ENCODE measurements at regions of chr19 and their contacts with region 1.

Region 1: DNA sequence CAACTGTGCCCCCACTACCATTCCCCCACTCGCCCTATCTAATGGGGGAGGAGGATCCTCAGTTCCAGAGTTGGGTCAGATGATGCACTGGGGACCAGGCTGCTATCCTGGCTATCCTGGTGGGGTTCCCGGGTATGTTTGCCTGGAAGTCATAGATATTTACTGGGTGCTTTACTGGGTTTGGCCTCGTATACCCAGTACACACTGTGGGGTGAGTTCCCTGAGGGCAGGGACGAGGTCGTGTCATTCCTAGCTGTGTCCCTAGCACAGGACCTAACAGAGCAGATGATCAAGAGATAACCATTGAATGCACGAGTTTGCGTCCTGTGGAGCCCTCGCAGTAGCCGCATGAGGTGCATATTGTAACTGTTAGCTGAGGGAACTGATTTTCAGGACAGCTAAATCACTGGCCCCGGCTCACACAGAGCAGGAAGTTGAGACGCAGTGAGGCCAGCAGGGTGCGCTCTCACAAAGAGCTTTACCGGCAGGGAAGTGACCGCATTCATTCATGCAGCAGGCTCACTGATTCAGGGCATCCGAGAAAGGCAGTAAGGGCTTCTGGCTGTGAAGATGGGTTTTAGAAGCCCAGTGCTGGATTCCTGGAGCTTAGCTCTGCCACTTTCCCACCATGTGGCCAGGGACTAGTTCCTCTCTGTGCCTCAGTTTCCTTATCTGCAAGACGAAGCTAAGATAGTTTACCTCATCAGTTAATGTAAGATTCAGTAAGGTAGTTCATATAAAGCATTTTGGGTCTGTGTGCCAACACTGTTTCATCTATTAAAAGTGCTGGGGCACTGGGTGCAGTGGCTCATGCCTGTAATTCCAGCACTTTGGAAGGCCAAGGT is 6.0 kb downstream of the RUVBL2 start:
- DNase-seq: peak; percentile 89
- ATAC-seq: peak; percentile 90
- H3K4me3 Mint-ChIP-seq: no peak overlapping the region; the same call in 1 of the 2 replicates
- H3K27ac Mint-ChIP-seq: peak overlapping the region; percentile 88
- H3K4me1 Mint-ChIP-seq: peaks cover 14% of the 10 kb centered on the region
- H3K27me3 Mint-ChIP-seq: no peaks in the 10 kb centered on the region
- CTCF ChIP-seq: peak; percentile 48; the same call in 1 of the 2 replicates

Region 2: DNA sequence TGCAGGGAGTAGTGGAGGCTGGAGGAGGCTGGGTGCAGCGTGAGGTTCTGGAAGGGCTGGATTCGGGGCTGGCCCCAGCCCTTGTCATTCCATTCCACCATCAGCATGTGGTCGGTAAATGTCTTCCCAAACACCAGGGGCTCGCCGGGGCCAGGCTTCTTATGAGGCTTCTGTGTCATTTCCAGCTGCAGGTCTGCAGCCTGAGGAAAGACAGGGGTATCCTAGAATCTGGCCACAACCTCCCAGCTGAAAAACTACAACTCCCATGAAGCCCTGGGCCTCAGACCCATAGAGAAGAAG is 193.2 kb before region 1 on chr19:
- CTCF ChIA-PET with region 1: no interaction called
- POLR2A ChIA-PET with region 1: no interaction called
- DNase-seq: peak; percentile 76
- ATAC-seq: no peak
- H3K4me3 Mint-ChIP-seq: peak overlapping the region; percentile 36; the same call in 1 of the 2 replicates
- H3K27ac Mint-ChIP-seq: peak overlapping the region; percentile 79; the same call in 1 of the 2 replicates
- H3K4me1 Mint-ChIP-seq: peaks cover 32% of the 10 kb centered on the region
- H3K27me3 Mint-ChIP-seq: peaks cover 17% of the 10 kb centered on the region
- CTCF ChIP-seq: no peak

Region 3: GRCh38 chr19:48965806-48966540 is 33.7 kb before region 1 on chr19:
- CTCF ChIA-PET with region 1: interaction called, 20 read pairs
- POLR2A ChIA-PET with region 1: interaction called, 3 read pairs
- DNase-seq: peak; percentile 91
- ATAC-seq: peak; percentile 16
- H3K4me3 Mint-ChIP-seq: peak overlapping the region; percentile 99
- H3K27ac Mint-ChIP-seq: peak overlapping the region; percentile 93
- H3K4me1 Mint-ChIP-seq: peaks cover 37% of the 10 kb centered on the region
- H3K27me3 Mint-ChIP-seq: no peaks in the 10 kb centered on the region
- CTCF ChIP-seq: no peak

Region 4: DNA sequence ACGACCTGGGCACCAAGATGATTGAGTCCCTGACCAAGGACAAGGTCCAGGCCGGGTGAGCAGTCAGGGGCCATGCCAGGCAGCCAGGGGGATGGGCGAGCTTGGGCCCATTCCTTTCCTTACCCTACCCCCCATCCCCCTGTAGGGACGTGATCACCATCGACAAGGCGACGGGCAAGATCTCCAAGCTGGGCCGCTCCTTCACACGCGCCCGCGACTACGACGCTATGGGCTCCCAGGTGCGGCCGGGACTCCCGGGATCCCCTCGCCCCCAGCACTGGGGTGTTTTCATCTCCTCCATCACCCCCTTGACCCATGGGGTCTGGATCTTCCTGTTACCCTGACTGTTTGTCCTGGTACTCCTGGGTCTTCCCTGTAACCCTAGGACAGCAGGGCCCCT is 10.1 kb after region 1 on chr19:
- CTCF ChIA-PET with region 1: interaction called, 30 read pairs
- POLR2A ChIA-PET with region 1: interaction called, 3 read pairs
- DNase-seq: no peak
- ATAC-seq: no peak
- H3K4me3 Mint-ChIP-seq: no peak overlapping the region
- H3K27ac Mint-ChIP-seq: no peak overlapping the region
- H3K4me1 Mint-ChIP-seq: no peaks in the 10 kb centered on the region
- H3K27me3 Mint-ChIP-seq: no peaks in the 10 kb centered on the region
- CTCF ChIP-seq: no peak

Region 5: DNA sequence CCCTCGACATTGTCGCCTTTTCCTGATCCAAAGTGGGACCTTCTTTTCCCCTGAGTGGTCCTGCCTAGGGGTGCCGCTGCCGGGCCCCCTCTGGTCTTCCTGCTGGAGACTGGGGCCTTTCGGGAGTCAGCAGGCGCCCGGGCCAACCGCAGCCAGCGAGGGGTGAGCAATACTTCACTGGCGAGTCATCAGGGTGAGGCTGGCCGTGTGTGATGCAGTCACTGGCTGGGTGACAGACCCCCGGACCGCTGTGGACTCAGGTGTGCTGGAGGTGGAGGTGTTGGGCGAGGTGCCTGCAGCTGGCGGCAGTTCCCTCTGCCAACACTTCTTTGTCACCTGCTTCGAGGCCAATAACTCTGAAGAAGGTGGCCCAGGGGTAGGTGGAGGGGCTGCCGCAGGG is 42.5 kb after region 1 on chr19:
- CTCF ChIA-PET with region 1: no interaction called
- POLR2A ChIA-PET with region 1: no interaction called
- DNase-seq: no peak
- ATAC-seq: no peak
- H3K4me3 Mint-ChIP-seq: no peak overlapping the region
- H3K27ac Mint-ChIP-seq: no peak overlapping the region
- H3K4me1 Mint-ChIP-seq: no peaks in the 10 kb centered on the region
- H3K27me3 Mint-ChIP-seq: peaks cover 10% of the 10 kb centered on the region
- CTCF ChIP-seq: no peak

Region 6: GRCh38 chr19:49064768-49065611 is 65.3 kb after region 1 on chr19 and contains the start of gene NTF4:
- CTCF ChIA-PET with region 1: interaction called, 21 read pairs
- POLR2A ChIA-PET with region 1: no interaction called
- DNase-seq: peak; percentile 78
- ATAC-seq: peak; percentile 73
- H3K4me3 Mint-ChIP-seq: peak within 1 kb of the TSS; percentile 66
- H3K27ac Mint-ChIP-seq: no peak within 1 kb of the TSS
- H3K4me1 Mint-ChIP-seq: peaks cover 33% of the 10 kb centered on the region
- H3K27me3 Mint-ChIP-seq: peaks cover 79% of the 10 kb centered on the region
- CTCF ChIP-seq: no peak
- total RNA-seq, gene NTF4: 3.9 to 7.7 TPM (median 5.0 TPM) in 3 replicates

Region 7: GRCh38 chr19:49118565-49119410 is 119.1 kb after region 1 on chr19 and contains the start of gene C19orf73:
- CTCF ChIA-PET with region 1: interaction called, 13 read pairs
- POLR2A ChIA-PET with region 1: no interaction called
- DNase-seq: peak; percentile 94
- ATAC-seq: peak; percentile 81
- H3K4me3 Mint-ChIP-seq: peak within 1 kb of the TSS; percentile 75
- H3K27ac Mint-ChIP-seq: peak within 1 kb of the TSS; percentile 61
- H3K4me1 Mint-ChIP-seq: peaks cover 14% of the 10 kb centered on the region
- H3K27me3 Mint-ChIP-seq: peaks cover 64% of the 10 kb centered on the region
- CTCF ChIP-seq: no peak
- total RNA-seq, gene C19orf73: 3.1 to 3.4 TPM (median 3.2 TPM) in 3 replicates

Region 8: DNA sequence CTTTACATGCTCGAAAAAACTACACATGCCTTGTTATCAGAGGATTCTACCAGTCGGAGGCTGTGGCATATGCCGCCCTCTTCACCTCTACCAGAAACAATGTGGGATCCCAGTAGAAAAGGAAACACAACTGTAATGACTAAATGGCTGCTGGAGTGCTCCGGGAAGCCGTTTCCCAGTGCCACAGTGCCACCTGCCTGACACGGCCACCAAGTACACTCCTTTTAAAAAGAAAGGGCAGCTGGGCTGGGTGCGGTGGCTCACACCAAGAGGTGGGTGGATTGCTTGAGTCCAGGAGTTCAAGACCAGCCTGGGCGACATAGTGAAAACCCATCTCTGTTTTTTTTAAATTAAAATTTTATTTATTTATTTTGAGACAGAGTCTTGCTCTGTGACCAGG is 225.2 kb after region 1 on chr19:
- CTCF ChIA-PET with region 1: interaction called, 11 read pairs
- POLR2A ChIA-PET with region 1: no interaction called
- DNase-seq: peak; percentile 79
- ATAC-seq: peak; percentile 82
- H3K4me3 Mint-ChIP-seq: no peak overlapping the region
- H3K27ac Mint-ChIP-seq: no peak overlapping the region
- H3K4me1 Mint-ChIP-seq: peaks cover 2% of the 10 kb centered on the region; the same call in 1 of the 2 replicates
- H3K27me3 Mint-ChIP-seq: peaks cover 8% of the 10 kb centered on the region
- CTCF ChIP-seq: peak; percentile 43